A549 (cell line): ENCODE measurements at regions of chr17 and their contacts with region 1.

Region 1: DNA sequence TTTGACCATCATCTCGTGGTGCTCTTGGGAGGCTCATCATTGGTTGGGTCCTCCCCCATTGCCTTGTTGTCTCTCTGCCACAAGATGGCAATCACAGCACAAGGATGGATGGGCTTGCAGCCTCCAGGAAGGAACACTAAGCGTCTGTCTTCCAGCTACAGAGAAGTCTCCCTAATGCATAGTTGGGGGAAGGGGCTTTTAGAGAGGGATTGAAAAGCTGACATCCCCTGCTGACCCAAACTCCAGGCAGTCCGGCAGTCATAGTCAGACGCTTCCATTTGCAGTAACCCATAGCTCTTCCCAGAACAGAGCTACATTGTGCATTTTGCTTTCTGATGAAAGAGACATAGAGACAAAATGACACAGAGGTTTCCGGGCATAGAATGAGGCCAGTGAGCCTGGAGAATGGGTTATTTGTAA is 111.4 kb downstream of the UTP18 start:
- DNase-seq: peak; percentile 86 to 88
- ATAC-seq: peak; percentile 96 to 98
- H3K4me3 ChIP-seq: no peak overlapping the region
- H3K27ac ChIP-seq: peak overlapping the region; percentile 37 to 59; a peak in 4 of 6 replicates
- H3K4me1 ChIP-seq: 0 out of 3 replicates have a peak, but pooled peaks cover 3% of the 10 kb centered on the region
- CTCF ChIP-seq: peak; percentile 94
- EP300 ChIP-seq: no peak
- POLR2A ChIP-seq: no peak
- RAD21 ChIP-seq: peak; percentile 98 to 100

Region 2: DNA sequence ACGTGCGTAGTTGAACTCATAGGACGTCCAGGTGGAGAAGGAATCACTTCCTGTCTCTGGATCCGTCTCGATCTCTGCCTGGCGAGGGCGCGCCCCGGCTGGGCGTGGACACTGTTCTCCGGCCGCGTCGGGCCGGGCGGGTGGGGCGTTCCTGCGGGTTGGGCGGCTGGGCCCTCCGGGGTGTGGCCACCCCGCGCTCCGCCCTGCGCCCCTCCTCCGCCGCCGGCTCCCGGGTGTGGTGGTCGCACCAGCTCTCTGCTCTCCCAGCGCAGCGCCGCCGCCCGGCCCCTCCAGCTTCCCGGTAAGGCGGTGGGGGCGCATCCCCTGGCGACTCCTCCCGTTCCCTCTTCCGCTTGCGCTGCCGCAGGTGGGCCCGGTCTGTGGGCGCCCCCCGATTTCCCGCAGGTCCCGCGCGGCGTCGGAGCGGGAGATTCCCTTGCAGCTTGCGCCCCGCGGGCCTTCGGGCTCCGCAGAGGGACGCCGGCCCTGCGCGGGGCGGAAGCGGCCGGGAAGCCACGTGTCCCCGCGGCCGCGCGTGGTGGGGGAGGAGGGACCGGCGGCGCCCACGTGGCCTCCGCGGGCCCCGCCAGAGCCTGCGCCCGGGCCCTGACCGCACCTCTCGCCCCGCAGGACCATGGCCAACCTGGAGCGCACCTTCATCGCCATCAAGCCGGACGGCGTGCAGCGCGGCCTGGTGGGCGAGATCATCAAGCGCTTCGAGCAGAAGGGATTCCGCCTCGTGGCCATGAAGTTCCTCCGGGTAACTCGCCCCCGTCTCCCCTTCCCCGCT is 205.3 kb before region 1 on chr17 and contains the start of gene NME2:
- CTCF ChIA-PET with region 1: no interaction called
- POLR2A ChIA-PET with region 1: no interaction called
- DNase-seq: peak; percentile 93 to 97
- ATAC-seq: peak; percentile 85 to 93
- H3K4me3 ChIP-seq: peak within 1 kb of the TSS; percentile 88
- H3K27ac ChIP-seq: peak within 1 kb of the TSS; percentile 94
- H3K4me1 ChIP-seq: peaks cover 21% of the 10 kb centered on the region
- CTCF ChIP-seq: no peak
- EP300 ChIP-seq: no peak
- POLR2A ChIP-seq: peak; percentile 74
- RAD21 ChIP-seq: no peak
- polyA plus RNA-seq, gene NME2: 1,425 and 1,432 TPM in 2 replicates

Region 3: DNA sequence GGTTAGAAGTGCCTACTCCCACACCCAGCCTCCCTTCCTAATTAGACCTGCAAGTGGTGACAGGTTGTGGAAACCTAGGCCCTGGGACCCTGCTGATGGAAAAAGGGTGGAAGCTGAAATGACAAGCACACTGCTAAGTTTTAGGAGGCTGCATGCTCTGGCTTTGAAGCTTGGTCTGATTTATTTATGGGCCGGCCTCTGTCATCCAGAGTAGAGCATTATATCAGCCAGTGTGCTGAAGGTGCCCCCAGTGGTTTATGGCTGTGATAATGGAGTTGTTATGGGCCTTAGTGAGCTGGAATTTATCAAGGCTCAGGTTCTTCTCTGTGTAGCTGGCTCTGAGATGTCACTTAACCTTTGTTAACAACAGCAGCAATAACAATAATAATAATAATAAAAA is 31.2 kb after region 1 on chr17:
- CTCF ChIA-PET with region 1: interaction called, 16 read pairs
- POLR2A ChIA-PET with region 1: no interaction called
- DNase-seq: no peak
- ATAC-seq: no peak
- H3K4me3 ChIP-seq: no peak overlapping the region
- H3K27ac ChIP-seq: peak overlapping the region in 1 of 2 experiments; percentile 17; a peak in 1 of 6 replicates
- H3K4me1 ChIP-seq: peaks cover 32% of the 10 kb centered on the region
- CTCF ChIP-seq: no peak
- EP300 ChIP-seq: no peak
- POLR2A ChIP-seq: no peak
- RAD21 ChIP-seq: no peak

Region 4: DNA sequence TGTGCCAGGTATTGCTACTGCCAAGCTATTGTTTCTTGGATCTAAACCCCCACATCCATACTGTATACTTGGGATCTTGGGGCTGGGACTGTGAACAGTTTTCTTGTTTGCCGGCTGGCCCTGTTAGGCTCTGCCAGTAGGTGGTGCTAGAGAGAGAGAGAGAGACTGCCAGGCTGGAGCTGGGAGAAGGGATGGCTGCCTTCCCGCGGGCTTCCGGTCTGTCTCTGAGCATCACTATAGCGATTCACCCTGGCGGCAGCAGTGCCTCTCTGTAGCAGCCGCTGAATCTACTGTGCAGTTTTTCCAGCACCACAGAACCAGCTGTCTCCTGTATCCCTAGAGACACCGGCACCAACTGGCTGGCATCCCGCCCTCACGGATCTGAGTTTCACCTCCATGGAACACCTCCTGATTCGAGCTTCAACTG is 89.8 kb after region 1 on chr17:
- CTCF ChIA-PET with region 1: interaction called, 31 read pairs
- POLR2A ChIA-PET with region 1: no interaction called
- DNase-seq: peak; percentile 81
- ATAC-seq: peak; percentile 88 to 98
- H3K4me3 ChIP-seq: peak overlapping the region; percentile 24; the same call in 2 of the 3 replicates
- H3K27ac ChIP-seq: peak overlapping the region in 1 of 2 experiments; percentile 26; a peak in 1 of 6 replicates
- H3K4me1 ChIP-seq: peaks cover 14% of the 10 kb centered on the region
- CTCF ChIP-seq: peak; percentile 85
- EP300 ChIP-seq: no peak
- POLR2A ChIP-seq: no peak
- RAD21 ChIP-seq: peak; percentile 62 to 73

Region 5: DNA sequence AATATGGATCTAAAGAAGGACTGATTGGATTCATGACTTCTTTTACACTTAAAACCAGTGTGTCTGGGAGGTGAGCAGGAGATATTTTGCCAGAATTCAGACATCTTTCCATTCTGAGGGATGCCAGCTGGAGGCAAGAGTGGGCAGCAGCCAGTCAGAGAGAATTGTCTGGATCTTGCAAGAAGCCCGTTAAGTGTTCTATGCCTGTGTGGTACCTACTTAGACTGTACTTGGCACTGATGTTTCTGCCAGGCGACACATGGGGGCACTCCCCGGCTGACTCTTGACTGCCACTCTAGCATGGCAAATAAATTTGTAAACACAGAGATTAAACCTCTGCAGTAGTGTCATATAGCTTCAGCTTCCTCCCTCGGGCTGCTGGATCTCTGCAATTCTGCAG is 136.3 kb after region 1 on chr17:
- CTCF ChIA-PET with region 1: interaction called, 14 read pairs
- POLR2A ChIA-PET with region 1: no interaction called
- DNase-seq: no peak
- ATAC-seq: no peak
- H3K4me3 ChIP-seq: no peak overlapping the region
- H3K27ac ChIP-seq: no peak overlapping the region
- H3K4me1 ChIP-seq: no peaks in the 10 kb centered on the region
- CTCF ChIP-seq: no peak
- EP300 ChIP-seq: no peak
- POLR2A ChIP-seq: no peak
- RAD21 ChIP-seq: peak in 1 of 2 experiments; percentile 10; a peak in 1 of 5 replicates

Region 6: DNA sequence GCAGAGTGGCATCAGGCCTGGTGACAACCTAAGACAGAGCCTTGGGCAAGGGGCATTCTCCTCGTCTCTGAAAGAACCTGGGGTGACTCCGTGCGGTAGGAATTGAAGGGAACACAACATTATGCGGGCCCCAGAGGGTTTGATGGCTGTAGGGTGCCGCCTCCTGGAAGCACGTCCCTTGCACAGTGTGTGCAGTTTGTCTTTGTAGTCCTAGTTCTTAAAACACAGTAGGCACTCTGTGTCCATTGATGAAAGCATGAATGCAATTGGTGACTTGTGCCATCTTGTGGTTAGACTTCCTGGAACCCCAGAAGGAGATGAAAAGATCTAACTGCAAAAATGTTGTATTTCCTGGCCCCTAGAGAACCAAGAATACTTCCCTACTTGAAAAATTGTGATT is 168.4 kb after region 1 on chr17:
- CTCF ChIA-PET with region 1: interaction called, 186 read pairs
- POLR2A ChIA-PET with region 1: no interaction called
- DNase-seq: peak in 1 of 2 experiments; percentile 20
- ATAC-seq: peak in 1 of 2 experiments; percentile 19; a peak in 2 of 6 replicates
- H3K4me3 ChIP-seq: no peak overlapping the region
- H3K27ac ChIP-seq: no peak overlapping the region
- H3K4me1 ChIP-seq: peaks cover 4% of the 10 kb centered on the region; the same call in 2 of the 3 replicates
- CTCF ChIP-seq: no peak
- EP300 ChIP-seq: no peak
- POLR2A ChIP-seq: no peak
- RAD21 ChIP-seq: peak in 1 of 2 experiments; percentile 62; a peak in 2 of 5 replicates

Region 7: GRCh38 chr17:51764387-51764972 is 392.7 kb after region 1 on chr17:
- CTCF ChIA-PET with region 1: interaction called, 21 read pairs
- POLR2A ChIA-PET with region 1: no interaction called
- DNase-seq: peak; percentile 78
- ATAC-seq: peak; percentile 90 to 99
- H3K4me3 ChIP-seq: no peak overlapping the region
- H3K27ac ChIP-seq: no peak overlapping the region
- H3K4me1 ChIP-seq: no peaks in the 10 kb centered on the region
- CTCF ChIP-seq: peak; percentile 89
- EP300 ChIP-seq: no peak
- POLR2A ChIP-seq: no peak
- RAD21 ChIP-seq: peak; percentile 87 to 91